Endothelial cell of umbilical vein (primary cell): ENCODE measurements at regions of chr1 and their contacts with region 1.

Region 1: DNA sequence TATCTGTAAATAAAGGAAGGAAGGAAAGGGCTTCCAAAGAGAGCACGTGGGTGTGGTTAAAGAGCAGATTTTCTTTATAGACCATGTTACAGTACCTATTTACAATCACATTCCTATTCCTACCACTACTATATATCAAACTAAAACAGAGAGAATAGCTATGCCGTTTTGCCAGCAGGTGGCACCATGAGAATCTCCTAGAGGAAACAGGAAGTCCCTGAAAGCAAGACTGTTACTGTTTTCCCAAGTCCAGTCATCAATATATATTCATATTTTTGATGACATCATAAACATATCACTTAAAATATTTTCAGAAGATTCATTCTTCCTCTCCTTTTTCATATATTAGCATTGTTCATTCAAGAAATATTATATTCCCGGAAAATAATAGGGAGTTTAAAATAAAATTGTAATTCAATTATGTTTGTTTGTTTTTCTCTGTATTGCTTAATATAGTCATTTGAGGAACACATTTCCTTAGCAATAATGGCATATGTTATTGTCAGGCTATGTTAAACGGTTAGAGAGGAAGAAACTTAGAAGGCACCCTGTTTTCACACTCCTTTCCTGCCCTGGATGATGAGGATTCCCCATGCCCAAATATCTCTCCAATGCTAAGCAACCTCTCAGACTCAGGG is 6.6 kb downstream of the CCDC190 start:
- DNase-seq: peak; percentile 82
- H3K4me3 ChIP-seq: peak overlapping the region in 1 of 3 experiments; percentile 4
- H3K27ac ChIP-seq: peak overlapping the region; percentile 93
- H3K4me1 ChIP-seq: peaks cover 57% of the 10 kb centered on the region
- H3K27me3 ChIP-seq: no peaks in the 10 kb centered on the region
- CTCF ChIP-seq: peak; percentile 63 to 68
- POLR2A ChIP-seq: peak; percentile 7

Region 2: DNA sequence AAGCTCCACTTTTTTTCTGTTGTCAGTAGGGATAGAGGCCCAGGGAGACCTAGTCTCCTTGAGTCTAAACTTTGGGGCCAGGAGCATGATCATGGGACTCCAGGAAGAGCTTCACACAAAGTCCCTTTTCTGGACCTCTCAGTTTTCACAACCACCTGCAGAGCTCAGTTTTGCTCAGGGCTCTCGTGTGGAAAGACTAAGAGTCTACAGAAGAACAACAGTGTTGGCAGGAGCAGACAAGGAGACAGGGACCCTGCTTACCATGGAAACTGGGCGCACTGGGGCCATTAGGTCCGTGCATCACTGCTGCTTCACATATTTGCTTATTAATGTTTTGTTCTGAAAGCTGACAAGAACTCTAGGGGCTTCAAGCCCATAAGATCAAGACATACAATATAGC is 127.8 kb before region 1 on chr1:
- CTCF ChIA-PET with region 1: no interaction called
- POLR2A ChIA-PET with region 1: no interaction called
- dilution Hi-C with region 1: no loop called
- intact Hi-C with region 1: no loop called
- DNase-seq: no peak
- H3K4me3 ChIP-seq: no peak overlapping the region
- H3K27ac ChIP-seq: no peak overlapping the region
- H3K4me1 ChIP-seq: no peaks in the 10 kb centered on the region
- H3K27me3 ChIP-seq: no peaks in the 10 kb centered on the region
- CTCF ChIP-seq: no peak
- POLR2A ChIP-seq: no peak

Region 3: DNA sequence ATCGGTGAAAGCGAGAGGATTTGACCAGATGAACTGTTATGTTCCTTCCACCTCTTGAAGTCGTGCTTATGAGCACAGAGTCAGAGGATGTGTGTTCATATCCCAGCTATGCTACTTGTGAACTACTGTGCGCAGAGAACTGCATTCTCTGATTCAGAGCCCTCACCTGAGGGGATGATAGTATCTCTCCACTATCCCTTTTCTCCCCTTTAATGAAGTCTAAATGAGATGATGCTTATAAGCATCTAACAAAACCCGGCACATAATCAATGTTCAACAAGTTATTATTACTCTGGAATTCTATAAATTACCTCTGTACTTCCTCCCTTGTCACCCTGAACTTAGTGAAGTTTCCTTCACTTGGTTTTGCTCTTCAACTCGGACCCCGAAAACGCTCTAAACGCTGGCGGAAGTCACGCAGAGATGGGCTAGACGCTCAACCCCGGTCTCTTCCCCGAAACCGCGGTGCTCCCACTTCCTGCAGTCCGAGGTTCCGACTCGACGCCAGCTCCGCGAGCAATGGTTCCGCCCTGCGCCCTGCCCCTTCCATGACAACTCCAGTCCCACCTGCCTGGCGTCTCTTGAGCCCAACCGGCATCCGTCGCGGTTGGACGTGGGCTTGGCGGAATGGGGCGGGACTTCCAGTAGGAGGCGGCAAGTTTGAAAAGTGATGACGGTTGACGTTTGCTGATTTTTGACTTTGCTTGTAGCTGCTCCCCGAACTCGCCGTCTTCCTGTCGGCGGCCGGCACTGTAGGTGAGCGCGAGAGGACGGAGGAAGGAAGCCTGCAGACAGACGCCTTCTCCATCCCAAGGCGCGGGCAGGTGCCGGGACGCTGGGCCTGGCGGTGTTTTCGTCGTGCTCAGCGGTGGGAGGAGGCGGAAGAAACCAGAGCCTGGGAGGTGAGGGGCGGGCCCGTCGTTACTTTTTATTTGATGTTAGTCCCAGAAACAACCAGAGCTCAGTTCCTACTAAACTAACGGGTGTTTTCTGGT is 467.2 kb after region 1 on chr1 and contains the start of gene NUF2:
- CTCF ChIA-PET with region 1: interaction called, 129 read pairs
- POLR2A ChIA-PET with region 1: no interaction called
- dilution Hi-C with region 1: no loop called
- intact Hi-C with region 1: loop called (anchors 1 kb)
- DNase-seq: peak; percentile 98
- H3K4me3 ChIP-seq: peak within 1 kb of the TSS; percentile 56 to 98 (median 93)
- H3K27ac ChIP-seq: peak within 1 kb of the TSS; percentile 71
- H3K4me1 ChIP-seq: peaks cover 23% of the 10 kb centered on the region
- H3K27me3 ChIP-seq: no peaks in the 10 kb centered on the region
- CTCF ChIP-seq: no peak
- POLR2A ChIP-seq: peak; percentile 84
- total RNA-seq, gene NUF2: 38.6 and 38.7 TPM in 2 replicates